ENCODE measurements at regions of chr4 and their contacts with region 1.

Region 1: DNA sequence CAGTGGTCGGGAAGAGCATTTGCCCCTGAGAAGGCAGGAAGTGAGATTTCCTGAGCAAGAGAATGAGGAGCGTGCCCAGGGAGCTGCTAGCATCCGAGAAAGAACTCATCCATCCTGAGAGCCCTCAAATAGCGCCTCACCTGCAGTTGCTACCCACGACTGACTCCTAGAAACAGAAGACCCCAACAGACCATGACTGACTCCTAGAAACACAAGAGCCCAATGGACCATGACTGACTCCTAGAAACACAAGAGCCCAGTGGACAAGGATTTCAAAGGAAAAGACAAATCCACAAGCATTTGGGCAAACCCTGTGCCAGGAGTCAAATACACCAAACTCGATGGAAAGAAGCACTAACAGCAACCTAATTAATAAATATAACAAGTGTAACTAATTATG is 575.2 kb upstream of the FRG1 start:
- DNase-seq: no peak
- H3K4me3 ChIP-seq: no peak overlapping the region
- H3K27ac ChIP-seq: no peak overlapping the region
- H3K4me1 ChIP-seq: peaks cover 6% of the 10 kb centered on the region
- H3K27me3 ChIP-seq: no peaks in the 10 kb centered on the region
- CTCF ChIP-seq: no peak
- POLR2A ChIP-seq: no peak

Region 2: DNA sequence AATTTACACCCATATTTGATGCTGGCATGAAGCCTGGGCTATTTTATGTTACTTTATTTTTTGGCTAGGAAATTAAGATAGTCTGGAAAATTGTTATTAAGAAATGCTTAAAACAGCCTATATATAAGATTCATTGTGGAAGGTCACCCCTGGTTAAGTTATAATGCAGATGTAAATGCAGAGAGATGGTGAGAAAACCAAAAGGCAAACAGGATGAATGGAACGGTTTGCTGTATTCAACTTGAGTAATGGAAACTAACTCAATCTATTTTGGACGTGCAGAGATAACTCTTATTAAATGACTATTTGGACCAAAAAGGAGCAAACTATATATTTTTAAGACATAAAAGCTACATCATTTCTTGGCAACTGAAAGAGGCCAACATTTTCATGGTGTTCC is 129.0 kb after region 1 on chr4:
- intact Hi-C with region 1: no loop called
- DNase-seq: no peak
- H3K4me3 ChIP-seq: no peak overlapping the region
- H3K27ac ChIP-seq: no peak overlapping the region
- H3K4me1 ChIP-seq: no peaks in the 10 kb centered on the region
- H3K27me3 ChIP-seq: no peaks in the 10 kb centered on the region
- CTCF ChIP-seq: no peak
- POLR2A ChIP-seq: no peak

Region 3: GRCh38 chr4:189780391-189780790 is 414.9 kb after region 1 on chr4:
- intact Hi-C with region 1: loop called (anchors 5 kb)
- DNase-seq: no peak
- H3K4me3 ChIP-seq: no peak overlapping the region
- H3K27ac ChIP-seq: no peak overlapping the region
- H3K4me1 ChIP-seq: no peaks in the 10 kb centered on the region
- H3K27me3 ChIP-seq: no peaks in the 10 kb centered on the region
- CTCF ChIP-seq: no peak
- POLR2A ChIP-seq: no peak